CD4-positive, alpha-beta memory T cell (primary cell): ENCODE measurements at regions of chr7 and their contacts with region 1.

Region 1: GRCh38 chr7:44797329-44798251 is 1.1 kb downstream of the PPIA start:
- DNase-seq: peak; percentile 80 to 92 (median 84)
- H3K4me3 ChIP-seq: peak overlapping the region; percentile 73 to 83
- H3K4me3 Mint-ChIP-seq: peak overlapping the region; percentile 87 to 97 (median 94)
- H3K27ac ChIP-seq: peak overlapping the region; percentile 96
- H3K27ac Mint-ChIP-seq: peak overlapping the region; percentile 94 to 98 (median 97)
- H3K4me1 ChIP-seq: peaks cover 34% of the 10 kb centered on the region
- H3K4me1 Mint-ChIP-seq: peaks cover 18 to 57% (median 30%) of the 10 kb centered on the region in 4 donors
- H3K27me3 ChIP-seq: no peaks in the 10 kb centered on the region
- H3K27me3 Mint-ChIP-seq: no peaks in the 10 kb centered on the region

Region 2: GRCh38 chr7:44573464-44574286 is 223.9 kb before region 1 on chr7 and contains the start of gene DDX56:
- CTCF ChIA-PET with region 1: no interaction called
- POLR2A ChIA-PET with region 1: interaction called, 6 read pairs
- intact Hi-C with region 1: loop called (anchors 2 kb)
- DNase-seq: peak; percentile 87 to 93 (median 88)
- H3K4me3 ChIP-seq: peak within 1 kb of the TSS; percentile 93
- H3K4me3 Mint-ChIP-seq: peak within 1 kb of the TSS; percentile 94 to 99 (median 96)
- H3K27ac ChIP-seq: peak within 1 kb of the TSS; percentile 94
- H3K27ac Mint-ChIP-seq: peak within 1 kb of the TSS; percentile 97 to 99 (median 99)
- H3K4me1 ChIP-seq: peaks cover 30% of the 10 kb centered on the region
- H3K4me1 Mint-ChIP-seq: peaks cover 26 to 41% (median 34%) of the 10 kb centered on the region in 4 donors
- H3K27me3 ChIP-seq: no peaks in the 10 kb centered on the region
- H3K27me3 Mint-ChIP-seq: no peaks in the 10 kb centered on the region
- total RNA-seq, gene DDX56: 109 to 114 TPM

Region 3: DNA sequence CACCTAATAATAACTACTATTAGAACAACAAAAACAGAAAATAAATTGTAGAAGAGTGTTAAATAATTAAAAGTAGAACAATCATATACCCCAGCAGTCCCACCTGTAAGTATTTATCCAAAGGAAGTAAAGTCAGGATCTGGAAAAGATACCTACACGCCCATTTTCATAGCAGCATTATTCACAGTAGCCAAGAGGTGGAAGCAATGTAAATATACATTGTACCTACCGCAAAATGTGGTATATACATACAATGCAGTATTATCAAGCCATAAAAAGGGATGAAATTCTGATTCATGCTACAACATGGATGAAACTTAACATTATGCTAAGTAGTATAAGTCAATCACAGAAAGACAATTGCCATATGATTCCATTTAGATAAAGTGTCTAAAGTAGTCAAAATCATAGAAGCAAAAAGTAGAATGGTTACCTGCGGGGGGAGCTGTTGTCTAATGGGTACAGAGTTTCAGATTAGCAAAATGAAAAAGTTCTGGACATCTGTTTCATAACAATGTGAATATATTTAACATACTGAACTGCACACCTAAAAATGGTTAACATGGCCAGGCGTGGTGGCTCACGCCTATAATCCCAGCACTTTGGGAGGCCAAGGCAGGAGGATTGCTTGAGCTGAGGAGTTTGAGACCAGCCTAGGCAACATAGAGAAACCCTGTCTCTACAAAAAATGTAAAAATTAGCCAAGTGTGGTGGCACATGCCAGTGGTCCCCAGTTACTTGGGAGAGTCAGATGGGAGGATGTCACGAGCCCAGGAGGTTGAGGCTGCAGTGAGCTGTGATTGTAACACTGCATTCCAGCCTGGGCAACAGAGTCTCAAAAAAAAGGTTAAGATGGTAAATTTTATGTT is 209.5 kb before region 1 on chr7:
- CTCF ChIA-PET with region 1: interaction called, 10 read pairs
- POLR2A ChIA-PET with region 1: interaction called, 28 read pairs
- intact Hi-C with region 1: loop called (anchors 1 kb)
- DNase-seq: peak; percentile 65 to 73 (median 71)
- H3K4me3 ChIP-seq: no peak overlapping the region
- H3K4me3 Mint-ChIP-seq: no peak overlapping the region
- H3K27ac ChIP-seq: no peak overlapping the region
- H3K27ac Mint-ChIP-seq: peak overlapping the region in 5 of 7 donors; percentile 42 to 86 (median 68)
- H3K4me1 ChIP-seq: peaks cover 2% of the 10 kb centered on the region
- H3K4me1 Mint-ChIP-seq: peaks cover 5 to 16% (median 9%) of the 10 kb centered on the region in 4 donors
- H3K27me3 ChIP-seq: no peaks in the 10 kb centered on the region
- H3K27me3 Mint-ChIP-seq: no peaks in the 10 kb centered on the region

Region 4: DNA sequence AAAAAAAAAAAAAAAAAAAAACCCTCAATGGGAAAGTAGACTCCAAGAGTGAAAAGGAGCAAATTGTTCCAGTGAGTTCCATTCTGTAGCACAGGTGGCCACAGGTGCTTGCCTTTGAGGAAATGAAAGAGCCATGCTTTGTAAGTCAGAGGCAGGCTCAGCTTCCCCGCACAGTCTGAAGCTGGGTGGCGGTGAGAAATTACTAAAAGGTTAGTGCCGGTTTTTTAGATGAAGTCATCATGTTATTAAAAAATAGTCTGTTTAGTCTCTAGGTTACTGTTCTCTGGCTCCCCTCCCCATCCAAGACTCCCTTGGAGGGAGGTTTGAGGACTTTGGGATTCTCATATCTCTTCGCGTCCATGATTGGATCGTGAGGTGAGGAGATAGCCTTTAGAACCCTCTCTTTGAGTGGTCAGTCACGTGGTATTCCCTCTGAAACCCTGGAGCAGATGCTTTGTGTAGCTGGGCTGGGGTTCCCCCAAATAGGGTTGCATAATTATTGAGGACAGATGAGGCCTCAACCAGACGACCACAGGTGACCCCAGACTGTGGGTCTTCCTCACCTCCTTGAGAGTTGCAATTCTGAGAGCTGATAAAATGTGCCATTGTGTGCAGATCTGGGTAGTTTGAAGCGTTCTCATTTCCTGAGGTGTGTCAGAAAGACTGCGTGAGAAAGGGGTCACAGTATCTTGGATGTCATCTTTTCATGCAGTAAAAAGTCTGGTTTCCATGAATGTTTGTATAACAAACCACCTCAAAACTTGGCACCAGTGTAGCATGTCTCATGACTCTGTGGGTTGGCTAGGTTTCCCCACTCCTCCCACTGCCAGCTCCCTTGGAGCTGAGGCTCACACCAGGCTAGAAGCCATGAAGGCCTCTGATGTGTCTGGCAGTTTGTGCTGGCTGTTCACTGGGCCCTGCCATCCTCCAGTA is 164.1 kb before region 1 on chr7:
- CTCF ChIA-PET with region 1: interaction called, 4 read pairs
- POLR2A ChIA-PET with region 1: interaction called, 14 read pairs
- intact Hi-C with region 1: loop called (anchors 2 kb)
- DNase-seq: peak; percentile 76 to 93 (median 85)
- H3K4me3 ChIP-seq: peak overlapping the region in 1 of 2 donors; percentile 30
- H3K4me3 Mint-ChIP-seq: peak overlapping the region; percentile 21 to 88 (median 75)
- H3K27ac ChIP-seq: peak overlapping the region; percentile 96
- H3K27ac Mint-ChIP-seq: peak overlapping the region; percentile 97 to 100 (median 100)
- H3K4me1 ChIP-seq: peaks cover 100% of the 10 kb centered on the region
- H3K4me1 Mint-ChIP-seq: peaks cover 66 to 98% (median 88%) of the 10 kb centered on the region in 4 donors
- H3K27me3 ChIP-seq: no peaks in the 10 kb centered on the region
- H3K27me3 Mint-ChIP-seq: no peaks in the 10 kb centered on the region

Region 5: DNA sequence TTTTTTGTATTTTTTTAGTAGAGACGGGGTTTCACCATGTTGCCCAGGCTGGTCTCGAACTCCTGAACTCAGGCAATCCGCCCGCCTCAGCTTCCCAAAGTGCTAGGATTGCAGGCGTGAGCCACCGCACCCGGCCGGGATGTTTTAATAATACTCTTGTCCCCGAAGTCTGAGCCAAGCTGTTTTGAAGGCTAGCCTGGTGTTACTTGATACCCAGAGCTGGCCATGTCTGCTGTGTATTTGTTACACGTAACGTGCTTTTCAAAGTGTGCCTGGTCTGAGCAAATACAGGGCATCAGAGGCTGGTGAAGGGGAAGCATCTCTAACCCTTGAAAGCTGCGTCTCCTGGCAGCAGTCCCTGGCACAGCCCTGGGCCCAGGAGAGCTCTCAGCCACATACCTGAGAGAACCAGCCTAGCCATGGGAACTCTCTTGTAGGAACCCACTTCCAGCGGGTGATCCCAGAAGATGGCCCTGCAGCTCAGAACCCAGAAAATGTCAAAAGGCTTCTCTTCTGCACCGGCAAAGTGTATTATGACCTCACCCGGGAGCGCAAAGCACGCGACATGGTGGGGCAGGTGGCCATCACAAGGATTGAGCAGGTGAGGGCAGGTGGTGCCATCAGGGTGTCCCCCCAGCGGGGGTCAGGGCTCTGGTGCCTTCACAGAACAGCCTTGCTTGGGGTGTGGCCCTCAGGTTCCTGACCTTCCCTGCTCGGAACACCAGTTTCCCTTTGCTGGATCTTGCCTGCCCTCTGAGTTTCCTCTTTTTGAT is 90.6 kb before region 1 on chr7:
- CTCF ChIA-PET with region 1: no interaction called
- POLR2A ChIA-PET with region 1: no interaction called
- intact Hi-C with region 1: loop called (anchors 10 kb)
- DNase-seq: no peak
- H3K4me3 ChIP-seq: no peak overlapping the region
- H3K4me3 Mint-ChIP-seq: no peak overlapping the region
- H3K27ac ChIP-seq: no peak overlapping the region
- H3K27ac Mint-ChIP-seq: peak overlapping the region in 1 of 7 donors; percentile 18
- H3K4me1 ChIP-seq: peaks cover 6% of the 10 kb centered on the region
- H3K4me1 Mint-ChIP-seq: peaks cover 6 to 13% (median 8%) of the 10 kb centered on the region in 4 donors
- H3K27me3 ChIP-seq: no peaks in the 10 kb centered on the region
- H3K27me3 Mint-ChIP-seq: no peaks in the 10 kb centered on the region

Region 6: DNA sequence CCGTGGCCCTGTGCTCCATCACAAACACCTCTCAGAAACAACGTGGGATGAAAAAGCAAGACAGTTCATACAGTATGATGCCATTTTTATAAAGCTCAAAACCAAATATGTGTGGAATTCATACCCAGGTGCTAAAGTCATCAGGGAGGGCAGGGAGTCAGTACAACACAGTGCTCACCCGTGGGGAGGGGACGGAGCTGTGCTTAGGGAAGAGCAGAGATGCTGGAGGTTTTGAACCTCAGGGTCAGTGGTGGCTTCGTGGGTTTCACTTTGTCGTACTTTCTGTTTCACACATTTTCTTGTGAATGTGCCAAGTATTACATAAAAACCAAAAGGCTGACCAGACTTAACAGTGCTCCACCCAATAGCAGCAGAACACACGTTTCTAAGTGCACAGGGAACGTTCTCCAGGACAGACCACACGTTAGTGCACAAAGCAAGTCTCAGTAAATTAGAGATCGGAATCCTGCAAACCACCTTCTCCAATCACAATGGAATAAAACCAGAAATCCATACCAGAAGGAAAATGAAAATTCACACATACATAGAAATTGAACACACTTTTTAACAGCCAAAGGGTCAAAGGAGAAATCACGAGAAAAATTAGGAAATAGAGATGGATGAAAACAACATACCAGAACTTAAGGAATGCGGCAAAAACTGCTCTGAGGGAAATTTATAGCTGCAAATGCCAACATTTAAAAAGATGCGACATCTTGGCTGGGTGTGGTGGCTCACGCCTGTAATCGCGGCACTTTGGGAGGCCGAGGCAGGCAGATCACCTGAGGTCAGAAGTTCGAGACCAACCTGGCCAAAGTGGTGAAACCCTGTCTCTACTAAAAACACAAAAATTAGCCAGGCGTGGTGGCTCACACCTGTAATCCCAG is 27.6 kb before region 1 on chr7:
- CTCF ChIA-PET with region 1: interaction called, 5 read pairs
- POLR2A ChIA-PET with region 1: interaction called, 10 read pairs
- intact Hi-C with region 1: loop called (anchors 1 kb)
- DNase-seq: peak in 3 of 5 donors; percentile 20 to 49 (median 22)
- H3K4me3 ChIP-seq: no peak overlapping the region
- H3K4me3 Mint-ChIP-seq: peak overlapping the region in 7 of 8 donors; percentile 25 to 74 (median 61)
- H3K27ac ChIP-seq: peak overlapping the region; percentile 33
- H3K27ac Mint-ChIP-seq: peak overlapping the region; percentile 76 to 95 (median 87)
- H3K4me1 ChIP-seq: peaks cover 41% of the 10 kb centered on the region
- H3K4me1 Mint-ChIP-seq: peaks cover 17 to 50% (median 38%) of the 10 kb centered on the region in 4 donors
- H3K27me3 ChIP-seq: no peaks in the 10 kb centered on the region
- H3K27me3 Mint-ChIP-seq: no peaks in the 10 kb centered on the region

Region 7: GRCh38 chr7:45080265-45080962 is 282.8 kb after region 1 on chr7:
- CTCF ChIA-PET with region 1: no interaction called
- POLR2A ChIA-PET with region 1: no interaction called
- intact Hi-C with region 1: no loop called
- DNase-seq: no peak
- H3K4me3 ChIP-seq: no peak overlapping the region
- H3K4me3 Mint-ChIP-seq: no peak overlapping the region
- H3K27ac ChIP-seq: no peak overlapping the region
- H3K27ac Mint-ChIP-seq: peak overlapping the region; percentile 39 to 91 (median 83)
- H3K4me1 ChIP-seq: no peaks in the 10 kb centered on the region
- H3K4me1 Mint-ChIP-seq: peaks cover 0 to 8% (median 5%) of the 10 kb centered on the region in 4 donors
- H3K27me3 ChIP-seq: no peaks in the 10 kb centered on the region
- H3K27me3 Mint-ChIP-seq: no peaks in the 10 kb centered on the region